Dorsolateral prefrontal cortex (tissue), 120 donors: ENCODE measurements at regions of chr19 and their contacts with region 1.

Region 1: DNA sequence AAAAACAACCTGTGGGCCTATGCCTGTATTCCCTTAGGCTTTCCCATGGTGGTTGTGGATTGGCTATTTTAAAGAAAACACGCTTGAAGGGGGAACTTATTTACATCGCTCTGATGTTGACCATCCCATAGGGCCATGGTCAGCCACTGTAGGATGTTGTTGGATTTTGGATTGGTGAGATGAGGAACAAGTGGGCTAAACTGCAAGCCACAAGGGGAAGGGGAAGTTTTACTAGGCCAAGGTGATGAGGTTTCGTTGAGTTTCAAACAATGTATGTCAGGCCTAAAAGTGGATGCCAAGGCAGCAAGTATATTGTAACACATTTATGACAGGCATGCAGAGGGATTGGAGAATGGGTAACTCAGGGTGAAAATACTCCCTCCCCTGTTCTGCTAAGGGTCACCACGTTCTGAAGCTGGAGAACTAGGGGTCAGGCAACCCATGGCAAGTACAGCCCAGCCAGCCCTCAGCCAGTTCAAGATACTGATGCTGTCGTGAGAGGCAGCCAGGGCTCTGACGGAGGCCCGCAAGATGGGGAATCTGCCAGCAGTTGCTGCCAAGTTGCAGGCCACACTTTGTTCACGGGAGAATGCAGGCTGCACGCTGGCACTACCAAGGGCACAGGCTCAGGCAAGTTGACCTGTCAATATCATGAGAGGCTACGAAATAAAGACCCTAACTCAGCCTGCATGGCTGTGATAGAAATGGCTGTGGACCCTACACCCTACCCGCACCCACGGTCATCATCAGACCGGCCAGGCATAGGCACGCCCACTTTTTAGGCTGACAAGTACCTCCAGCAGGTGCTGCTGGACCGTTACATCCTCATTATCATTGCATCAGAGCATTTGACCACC is 11.1 kb downstream of the IRGC start:
- DNase-seq: peak in 4 of 10 donors; percentile 15 to 59 (median 38)
- H3K4me3 ChIP-seq: no peak overlapping the region
- H3K27ac ChIP-seq: peak overlapping the region in 15 of 59 donors; percentile 2 to 71 (median 37)
- H3K27me3 ChIP-seq: no peaks in the 10 kb centered on the region
- CTCF ChIP-seq: no peak

Region 2: GRCh38 chr19:43687660-43687997 is 39.3 kb before region 1 on chr19:
- intact Hi-C with region 1: loop called in 1 of 2 experiments (anchors 5 kb)
- DNase-seq: peak in 7 of 10 donors; percentile 52 to 83 (median 71)
- H3K4me3 ChIP-seq: no peak overlapping the region
- H3K27ac ChIP-seq: peak overlapping the region in 50 of 59 donors; percentile 3 to 91 (median 74)
- H3K27me3 ChIP-seq: no peaks in the 10 kb centered on the region
- CTCF ChIP-seq: no peak

Region 3: GRCh38 chr19:43700395-43701000 is 26.5 kb before region 1 on chr19:
- intact Hi-C with region 1: no loop called
- DNase-seq: peak in 7 of 10 donors; percentile 34 to 48 (median 42)
- H3K4me3 ChIP-seq: peak overlapping the region in 13 of 59 donors; percentile 2 to 32 (median 11)
- H3K27ac ChIP-seq: peak overlapping the region in 42 of 59 donors; percentile 1 to 80 (median 53)
- H3K27me3 ChIP-seq: peaks cover 0 to 9% (median 0%) of the 10 kb centered on the region in 45 donors
- CTCF ChIP-seq: no peak

Region 4: DNA sequence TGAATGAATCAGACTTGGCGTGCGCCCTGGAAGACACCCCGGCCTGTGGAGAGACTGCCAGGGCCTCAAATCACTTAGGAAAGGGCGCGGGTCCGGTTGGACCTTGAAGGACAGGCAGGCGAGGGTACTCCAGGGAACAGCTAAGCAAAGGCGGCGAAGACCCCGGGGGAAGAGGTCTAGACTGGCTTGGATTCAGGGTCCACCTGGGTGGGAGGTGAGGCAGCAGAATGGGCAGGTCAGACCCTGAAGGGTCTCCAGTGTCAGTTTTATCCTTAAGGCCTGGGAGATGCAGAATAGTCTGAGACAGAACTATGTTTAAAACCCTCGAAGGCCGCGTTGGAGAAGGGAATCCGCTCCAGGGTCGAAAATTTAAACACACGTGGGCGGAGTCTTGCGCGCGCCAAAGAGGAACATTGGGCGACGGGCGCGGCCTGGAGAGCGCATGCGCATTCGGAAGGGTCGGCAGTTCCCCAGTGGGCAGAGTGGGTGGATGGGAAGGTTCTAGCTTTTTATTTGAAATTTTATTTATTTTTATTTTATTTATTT is 28.4 kb after region 1 on chr19:
- intact Hi-C with region 1: no loop called
- DNase-seq: peak; percentile 69 to 88 (median 80)
- H3K4me3 ChIP-seq: peak overlapping the region; percentile 61 to 98 (median 85)
- H3K27ac ChIP-seq: peak overlapping the region; percentile 5 to 100 (median 99)
- H3K27me3 ChIP-seq: no peaks in the 10 kb centered on the region
- CTCF ChIP-seq: peak in 9 of 56 donors; percentile 6 to 23 (median 11)